Activated T-helper 2 cell treated with anti-CD3 and anti-CD28 coated beads, Interferon-gamma antibody, Interleukin-2, Interleukin-4, amounts not matched to agents 10 μg/mL and 5 μg/mL and 100 μg/mL, durations not matched to agents 14 hours and 24 hours and 36 hours (primary cell): ENCODE measurements at regions of chr1 and their contacts with region 1.

Region 1: GRCh38 chr1:50481142-50481736 is 58.0 kb upstream of the DMRTA2 start:
- DNase-seq: no peak
- H3K4me3 Mint-ChIP-seq: no peak overlapping the region
- H3K27ac Mint-ChIP-seq: no peak overlapping the region
- H3K4me1 Mint-ChIP-seq: no peaks in the 10 kb centered on the region
- H3K27me3 Mint-ChIP-seq: no peaks in the 10 kb centered on the region

Region 2: GRCh38 chr1:50502147-50502546 is 20.9 kb after region 1 on chr1:
- intact Hi-C with region 1: loop called (anchors 2 kb)
- DNase-seq: no peak
- H3K4me3 Mint-ChIP-seq: no peak overlapping the region
- H3K27ac Mint-ChIP-seq: no peak overlapping the region
- H3K4me1 Mint-ChIP-seq: no peaks in the 10 kb centered on the region
- H3K27me3 Mint-ChIP-seq: no peaks in the 10 kb centered on the region

Region 3: GRCh38 chr1:50658459-50659076 is 177.3 kb after region 1 on chr1:
- intact Hi-C with region 1: no loop called
- DNase-seq: no peak
- H3K4me3 Mint-ChIP-seq: no peak overlapping the region
- H3K27ac Mint-ChIP-seq: no peak overlapping the region
- H3K4me1 Mint-ChIP-seq: peaks cover 7% of the 10 kb centered on the region
- H3K27me3 Mint-ChIP-seq: no peaks in the 10 kb centered on the region

Region 4: DNA sequence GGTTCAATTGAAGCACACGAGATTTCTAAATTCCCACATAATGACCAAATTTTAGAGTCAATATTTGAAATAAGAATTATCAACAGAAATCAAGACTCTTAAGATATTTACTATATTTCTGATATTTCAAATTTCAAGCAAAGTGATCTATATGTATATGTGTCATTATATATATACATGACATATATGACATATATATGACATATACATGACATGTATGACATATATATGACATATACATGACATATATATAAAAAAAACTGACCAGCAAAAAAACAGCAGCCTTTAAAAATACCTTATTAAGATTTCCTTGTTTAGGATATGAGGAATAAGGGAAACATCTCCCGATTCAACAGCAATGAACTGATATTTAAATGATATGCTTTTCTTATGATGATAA is 212.6 kb after region 1 on chr1:
- intact Hi-C with region 1: no loop called
- DNase-seq: no peak
- H3K4me3 Mint-ChIP-seq: no peak overlapping the region
- H3K27ac Mint-ChIP-seq: no peak overlapping the region
- H3K4me1 Mint-ChIP-seq: no peaks in the 10 kb centered on the region
- H3K27me3 Mint-ChIP-seq: no peaks in the 10 kb centered on the region